Natural killer cell (primary cell): ENCODE measurements at regions of chr16 and their contacts with region 1.

Region 1: GRCh38 chr16:2682209-2683021 is at the start of gene KCTD5:
- DNase-seq: peak; percentile 94 to 98
- ATAC-seq: peak; percentile 92 to 97 (median 94)
- H3K4me3 ChIP-seq: peak within 1 kb of the TSS; percentile 94
- H3K4me3 Mint-ChIP-seq: peak within 1 kb of the TSS; percentile 97
- H3K27ac ChIP-seq: peak within 1 kb of the TSS; percentile 80
- H3K27ac Mint-ChIP-seq: peak within 1 kb of the TSS; percentile 96
- H3K4me1 ChIP-seq: peaks cover 37% of the 10 kb centered on the region
- H3K4me1 Mint-ChIP-seq: peaks cover 15 to 17% of the 10 kb centered on the region in 2 donors
- H3K27me3 ChIP-seq: no peaks in the 10 kb centered on the region
- H3K27me3 Mint-ChIP-seq: no peaks in the 10 kb centered on the region
- CTCF ChIP-seq: no peak
- total RNA-seq, gene KCTD5: 34.2 to 37.9 (median 36.5) TPM

Region 2: DNA sequence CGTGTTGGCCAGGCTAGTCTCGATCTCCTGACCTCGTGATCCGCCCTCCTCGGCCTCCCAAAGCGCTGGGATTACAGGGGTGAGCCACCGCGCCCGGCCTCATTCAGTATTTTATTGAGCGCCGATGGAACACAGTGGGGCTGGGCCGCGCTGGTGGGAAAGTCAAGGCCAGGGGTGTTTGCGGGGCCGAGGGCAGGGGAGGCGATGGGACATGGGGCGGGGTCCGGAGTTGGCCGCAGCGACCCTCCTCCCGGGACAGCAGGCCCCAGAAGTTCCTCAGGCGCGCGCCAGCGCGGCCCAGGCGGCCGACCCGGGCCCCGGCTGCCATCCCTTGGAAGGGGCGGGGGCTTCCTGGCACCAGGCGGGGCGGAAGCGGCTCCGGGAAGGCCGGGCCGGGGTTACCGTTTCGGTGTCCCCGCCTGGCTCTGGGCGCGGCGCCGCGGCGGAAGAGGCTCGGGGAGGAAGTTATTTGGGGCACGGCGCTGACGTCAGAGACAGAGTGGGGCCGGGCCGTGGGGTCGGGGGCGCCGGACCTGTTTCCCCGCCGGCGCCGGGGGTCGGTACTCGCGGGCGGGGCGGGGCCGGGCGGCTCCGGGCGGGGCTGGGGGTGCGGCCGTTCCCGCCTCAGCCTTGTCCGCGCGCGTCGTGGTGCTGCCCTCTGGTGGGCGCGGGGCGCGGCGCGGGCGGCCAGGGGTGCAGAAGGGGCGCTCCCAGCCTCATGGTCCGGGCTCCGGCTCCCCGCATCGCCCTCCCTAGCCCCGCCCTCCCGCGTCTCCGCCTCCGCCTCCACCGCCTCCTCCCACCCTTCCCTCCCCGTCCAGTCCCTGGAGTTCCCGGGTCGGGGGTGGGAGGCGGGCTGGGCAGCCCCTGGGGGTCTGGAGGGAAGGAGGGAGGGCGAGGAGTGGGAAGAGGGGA is 38.6 kb after region 1 on chr16:
- intact Hi-C with region 1: loop called (anchors 5 kb)
- DNase-seq: peak; percentile 79 to 93
- ATAC-seq: peak; percentile 92 to 96 (median 92)
- H3K4me3 ChIP-seq: peak overlapping the region; percentile 48
- H3K4me3 Mint-ChIP-seq: peak overlapping the region; percentile 73
- H3K27ac ChIP-seq: peak overlapping the region; percentile 29
- H3K27ac Mint-ChIP-seq: peak overlapping the region in 1 of 2 donors; percentile 83
- H3K4me1 ChIP-seq: peaks cover 13% of the 10 kb centered on the region
- H3K4me1 Mint-ChIP-seq: no peaks in the 10 kb centered on the region
- H3K27me3 ChIP-seq: no peaks in the 10 kb centered on the region
- H3K27me3 Mint-ChIP-seq: peaks cover 4 to 7% of the 10 kb centered on the region in 2 donors
- CTCF ChIP-seq: peak; percentile 92